Dendritic cell treated with granulocyte-macrophage colony-stimulating factor and Interleukin-4, amounts not matched to agents 40 ng/mL and 50 ng/mL, for 4 days (primary cell): ENCODE measurements at regions of chr18 and their contacts with region 1.

Region 1: DNA sequence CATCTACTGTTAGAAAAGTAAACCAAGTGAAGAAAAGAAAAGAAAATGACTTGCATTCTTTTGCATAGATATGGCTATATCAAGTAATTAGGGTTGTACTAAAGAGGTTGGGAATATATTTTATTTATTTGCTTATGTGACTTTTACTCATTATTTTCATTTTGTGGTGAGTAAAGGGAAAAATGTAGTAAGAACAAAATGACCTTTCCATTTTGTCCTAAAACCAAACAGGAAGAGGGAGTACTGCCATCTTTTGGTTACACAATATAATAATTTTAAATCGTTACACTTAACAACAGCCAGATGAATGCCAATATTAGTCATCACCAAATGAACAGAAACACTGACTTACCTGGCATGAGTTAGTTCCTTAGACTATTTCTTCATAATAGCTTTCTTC is 47.3 kb upstream of the NDUFV2 start:
- H3K4me3 Mint-ChIP-seq: no peak overlapping the region
- H3K27ac Mint-ChIP-seq: no peak overlapping the region
- H3K4me1 Mint-ChIP-seq: peaks cover under 1% of the 10 kb centered on the region
- H3K27me3 Mint-ChIP-seq: no peaks in the 10 kb centered on the region

Region 2: DNA sequence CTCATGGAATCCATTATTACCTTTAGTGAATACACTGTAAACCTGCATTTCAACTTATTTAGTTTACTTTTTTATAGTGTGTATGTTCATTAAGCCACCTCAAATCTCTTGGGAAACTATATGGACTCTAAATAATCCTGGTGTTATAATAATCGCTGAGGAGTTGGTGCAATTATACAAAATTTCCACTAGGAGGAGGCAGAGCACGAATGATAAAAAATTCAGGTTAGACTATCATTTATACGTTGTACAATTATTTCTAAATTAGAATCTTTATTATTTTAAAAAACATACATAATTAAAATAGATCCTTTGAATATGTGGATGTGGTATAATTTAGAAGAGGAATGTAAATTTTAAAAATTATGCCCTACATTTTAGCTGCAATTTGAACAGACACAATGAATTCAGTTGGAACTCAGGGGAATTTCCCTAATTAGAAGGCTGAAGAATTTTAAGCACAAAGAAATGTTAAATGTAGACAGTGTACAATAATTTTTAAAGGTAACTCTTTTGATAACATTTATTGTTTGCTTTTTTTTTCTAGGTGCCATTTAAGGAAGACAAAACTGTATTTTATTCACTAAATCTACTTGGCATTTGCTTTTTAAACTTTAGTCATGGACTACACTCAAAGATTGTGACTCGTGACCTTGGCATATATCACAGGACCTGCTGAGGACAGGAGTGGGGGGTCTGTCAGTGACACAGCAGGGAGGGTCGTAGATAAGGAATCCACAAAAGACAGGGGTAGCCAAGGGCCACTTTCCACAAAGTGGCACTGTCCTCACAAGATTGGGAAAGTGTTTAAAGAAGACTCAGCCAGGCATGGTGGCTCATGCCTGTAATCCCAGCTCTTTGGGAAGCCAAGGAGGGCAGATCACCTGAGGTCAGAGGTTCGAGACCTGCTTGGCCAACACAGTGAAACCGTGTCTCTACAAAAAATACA is 400.4 kb before region 1 on chr18:
- intact Hi-C with region 1: loop called (anchors 5 kb)
- H3K4me3 Mint-ChIP-seq: no peak overlapping the region
- H3K27ac Mint-ChIP-seq: no peak overlapping the region
- H3K4me1 Mint-ChIP-seq: no peaks in the 10 kb centered on the region
- H3K27me3 Mint-ChIP-seq: peaks cover 17% of the 10 kb centered on the region

Region 3: GRCh38 chr18:8998481-8999217 is 56.5 kb before region 1 on chr18:
- intact Hi-C with region 1: no loop called
- H3K4me3 Mint-ChIP-seq: no peak overlapping the region
- H3K27ac Mint-ChIP-seq: no peak overlapping the region
- H3K4me1 Mint-ChIP-seq: peaks cover 21% of the 10 kb centered on the region
- H3K27me3 Mint-ChIP-seq: peaks cover 5% of the 10 kb centered on the region

Region 4: GRCh38 chr18:9008709-9009635 is 46.2 kb before region 1 on chr18:
- intact Hi-C with region 1: no loop called
- H3K4me3 Mint-ChIP-seq: no peak overlapping the region
- H3K27ac Mint-ChIP-seq: no peak overlapping the region
- H3K4me1 Mint-ChIP-seq: peaks cover 9% of the 10 kb centered on the region
- H3K27me3 Mint-ChIP-seq: peaks cover 10% of the 10 kb centered on the region

Region 5: GRCh38 chr18:9137168-9138066 is 82.2 kb after region 1 on chr18:
- intact Hi-C with region 1: no loop called
- H3K4me3 Mint-ChIP-seq: peak overlapping the region; percentile 80
- H3K27ac Mint-ChIP-seq: peak overlapping the region; percentile 98
- H3K4me1 Mint-ChIP-seq: peaks cover 36% of the 10 kb centered on the region
- H3K27me3 Mint-ChIP-seq: no peaks in the 10 kb centered on the region